ENCODE measurements at regions of chr10 and their contacts with region 1.

Region 1: GRCh38 chr10:79068562-79069324 is at the start of gene ZMIZ1:
- DNase-seq: peak; percentile 63 to 90 (median 76)
- ATAC-seq: peak; percentile 62
- H3K4me3 ChIP-seq: peak within 1 kb of the TSS; percentile 97
- H3K4me3 Mint-ChIP-seq: peak within 1 kb of the TSS; percentile 97
- H3K27ac ChIP-seq: peak within 1 kb of the TSS; percentile 44 to 46
- H3K27ac Mint-ChIP-seq: peak within 1 kb of the TSS; percentile 86
- H3K4me1 ChIP-seq: peaks cover 64% of the 10 kb centered on the region
- H3K4me1 Mint-ChIP-seq: peaks cover 56% of the 10 kb centered on the region
- H3K27me3 ChIP-seq: no peaks in the 10 kb centered on the region
- H3K27me3 Mint-ChIP-seq: no peaks in the 10 kb centered on the region
- CTCF ChIP-seq: no peak
- total RNA-seq, gene ZMIZ1: 14.6 to 15.5 TPM

Region 2: DNA sequence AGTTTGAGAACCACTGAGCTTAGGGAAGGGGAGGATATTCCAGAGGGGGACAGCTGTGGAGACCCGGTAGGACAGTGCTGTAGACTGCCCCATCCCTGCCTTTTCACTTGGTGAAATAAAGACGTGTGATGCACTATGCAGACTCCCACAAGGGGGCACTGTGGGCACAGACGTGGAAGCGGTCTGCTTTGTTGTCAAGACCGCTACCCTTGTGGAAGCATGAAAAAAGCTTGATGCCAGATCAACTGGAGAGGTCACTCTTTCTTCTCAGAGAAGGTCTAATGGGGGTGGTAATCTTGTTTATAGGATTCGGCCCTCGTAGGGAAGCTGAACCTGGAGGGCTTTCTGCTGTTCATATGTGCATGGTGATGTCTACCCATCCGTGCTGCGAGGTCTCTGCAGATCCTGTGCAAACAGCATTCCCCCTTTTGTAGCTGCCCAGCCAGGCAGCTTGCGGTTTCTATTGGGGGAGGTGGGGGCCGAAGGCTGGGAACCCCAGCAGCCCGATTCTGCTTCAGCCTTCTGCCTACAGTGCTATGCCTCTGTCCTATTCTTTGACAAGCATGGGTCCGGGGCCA is 1021.3 kb before region 1 on chr10:
- CTCF ChIA-PET with region 1: interaction called, 3 read pairs
- POLR2A ChIA-PET with region 1: no interaction called
- intact Hi-C with region 1: loop called in 1 of 2 experiments (anchors 5 kb)
- DNase-seq: peak; percentile 70 to 87 (median 78)
- ATAC-seq: peak; percentile 94
- H3K4me3 ChIP-seq: no peak overlapping the region
- H3K4me3 Mint-ChIP-seq: no peak overlapping the region
- H3K27ac ChIP-seq: no peak overlapping the region
- H3K27ac Mint-ChIP-seq: no peak overlapping the region
- H3K4me1 ChIP-seq: peaks cover 14% of the 10 kb centered on the region
- H3K4me1 Mint-ChIP-seq: peaks cover 19% of the 10 kb centered on the region
- H3K27me3 ChIP-seq: no peaks in the 10 kb centered on the region
- H3K27me3 Mint-ChIP-seq: no peaks in the 10 kb centered on the region
- CTCF ChIP-seq: peak; percentile 86

Region 3: DNA sequence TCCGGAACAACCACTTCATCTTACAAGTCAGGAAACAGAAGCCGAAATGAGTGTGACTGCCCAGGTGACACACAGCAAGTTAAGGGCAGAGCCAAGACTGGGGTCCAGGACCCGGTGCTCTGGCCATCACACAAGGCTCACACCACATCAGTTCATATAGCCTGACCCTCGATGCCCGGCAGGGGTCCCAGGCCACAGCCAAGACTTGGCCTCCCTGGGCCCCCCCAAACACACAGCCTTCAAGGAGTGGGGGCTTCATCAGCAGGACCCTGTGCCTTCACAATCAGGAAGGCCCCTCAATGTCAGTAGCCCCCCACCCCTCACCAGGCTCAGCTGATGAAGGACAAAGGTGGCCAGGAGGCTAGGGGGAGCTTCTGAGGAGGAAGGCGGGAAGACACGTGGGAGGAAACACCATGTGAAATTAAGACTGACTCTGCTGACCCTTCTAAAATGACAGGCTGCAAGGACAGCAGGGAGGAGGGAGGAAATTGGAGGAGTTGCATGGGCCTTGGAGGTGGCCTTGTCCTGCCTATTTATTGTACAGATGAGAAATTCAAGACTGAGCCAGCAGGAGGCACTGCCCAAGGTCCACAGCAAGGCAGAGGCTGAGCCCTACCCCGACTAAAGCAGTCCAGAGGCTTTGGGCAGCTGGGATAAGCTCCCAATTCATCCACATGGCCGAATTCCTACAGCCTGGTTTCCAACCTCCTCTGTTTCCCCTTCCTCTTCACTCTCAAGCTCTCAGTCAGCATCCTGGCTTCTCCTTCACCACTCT is 216.1 kb before region 1 on chr10:
- CTCF ChIA-PET with region 1: no interaction called
- POLR2A ChIA-PET with region 1: no interaction called
- intact Hi-C with region 1: loop called in 1 of 2 experiments (anchors 5 kb)
- DNase-seq: peak in 5 of 14 experiments; percentile 6 to 47 (median 32)
- ATAC-seq: no peak
- H3K4me3 ChIP-seq: no peak overlapping the region
- H3K4me3 Mint-ChIP-seq: no peak overlapping the region
- H3K27ac ChIP-seq: no peak overlapping the region
- H3K27ac Mint-ChIP-seq: no peak overlapping the region
- H3K4me1 ChIP-seq: no peaks in the 10 kb centered on the region
- H3K4me1 Mint-ChIP-seq: no peaks in the 10 kb centered on the region
- H3K27me3 ChIP-seq: no peaks in the 10 kb centered on the region
- H3K27me3 Mint-ChIP-seq: no peaks in the 10 kb centered on the region
- CTCF ChIP-seq: no peak

Region 4: DNA sequence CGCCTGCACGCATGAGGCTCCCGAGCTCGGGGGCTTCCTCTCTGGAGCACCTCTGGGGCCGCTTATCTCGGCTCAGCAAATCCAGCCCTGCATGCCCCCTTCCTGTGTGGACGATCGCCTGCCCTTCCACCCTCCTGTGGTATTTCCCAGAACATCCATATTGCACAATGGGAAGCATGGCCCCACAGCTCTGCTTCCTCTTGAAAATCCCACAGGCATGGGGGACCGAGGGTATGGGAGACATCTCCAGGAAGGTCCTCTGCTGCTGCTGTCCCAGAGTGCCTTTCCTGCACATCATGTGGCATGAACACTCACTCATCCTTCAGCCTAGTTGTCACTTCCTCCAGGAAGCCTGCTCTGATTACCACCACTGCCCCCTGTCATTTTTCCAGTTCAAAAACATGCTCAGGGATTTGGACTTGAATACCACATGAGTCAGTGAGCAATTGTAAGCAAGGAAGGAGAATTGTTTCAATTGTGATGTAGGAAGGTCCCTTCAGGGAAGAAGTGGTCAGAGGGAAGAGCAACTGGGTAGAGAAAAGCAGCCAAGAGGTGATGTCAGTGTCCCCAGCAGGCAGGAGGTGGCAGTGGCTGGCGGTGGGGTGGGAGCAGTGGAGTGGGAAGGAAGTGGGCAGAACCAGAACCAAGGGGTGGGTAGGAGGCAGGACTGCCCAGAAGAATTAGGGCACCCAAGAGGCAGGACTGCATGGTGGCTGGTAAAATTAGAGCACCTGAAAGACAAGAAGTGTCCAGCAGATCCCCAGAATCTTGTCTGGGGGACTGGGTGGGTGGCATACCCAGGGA is 67.5 kb before region 1 on chr10:
- CTCF ChIA-PET with region 1: no interaction called
- POLR2A ChIA-PET with region 1: no interaction called
- intact Hi-C with region 1: no loop called
- DNase-seq: peak in 2 of 14 experiments; percentile 39 to 49
- ATAC-seq: no peak
- H3K4me3 ChIP-seq: no peak overlapping the region
- H3K4me3 Mint-ChIP-seq: no peak overlapping the region
- H3K27ac ChIP-seq: no peak overlapping the region
- H3K27ac Mint-ChIP-seq: no peak overlapping the region
- H3K4me1 ChIP-seq: peaks cover 6% of the 10 kb centered on the region
- H3K4me1 Mint-ChIP-seq: no peaks in the 10 kb centered on the region
- H3K27me3 ChIP-seq: no peaks in the 10 kb centered on the region
- H3K27me3 Mint-ChIP-seq: no peaks in the 10 kb centered on the region
- CTCF ChIP-seq: no peak

Region 5: DNA sequence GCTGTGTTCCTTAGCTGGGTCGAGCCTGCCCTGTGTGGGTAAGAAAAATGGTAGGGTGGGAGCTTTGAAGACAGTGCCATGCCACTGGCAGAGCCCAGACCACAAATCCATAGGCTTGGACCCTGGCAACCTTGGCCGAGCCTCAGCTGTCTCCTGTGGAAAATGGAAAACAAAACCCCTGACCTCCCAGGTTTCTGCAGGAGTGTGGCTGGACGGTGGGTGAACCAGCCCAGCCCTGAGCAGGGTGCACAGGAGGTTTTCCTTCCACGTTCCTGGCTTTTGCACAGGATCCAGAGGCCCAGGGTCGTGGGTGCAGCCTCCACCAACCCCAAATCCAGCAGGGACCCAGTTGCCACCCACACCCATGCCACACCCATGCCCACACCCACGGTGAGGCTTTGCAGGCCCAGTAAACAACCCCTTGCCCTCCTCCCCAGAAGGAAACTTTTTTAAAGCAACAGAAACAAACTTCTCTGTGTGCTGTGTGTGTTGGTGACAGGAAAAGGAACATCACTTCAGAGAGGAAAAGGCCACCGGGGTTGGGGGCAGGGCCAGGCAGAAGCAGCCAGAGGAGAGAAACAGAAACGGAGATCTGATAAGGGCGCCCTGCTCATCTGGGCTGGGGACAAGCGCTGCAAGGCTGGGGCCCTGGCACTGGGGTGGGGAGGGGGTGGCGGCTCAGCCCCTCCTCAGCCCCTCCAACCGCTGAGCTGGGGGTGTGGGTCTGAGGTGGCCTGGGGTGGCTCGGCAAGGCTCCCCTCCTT is 20.7 kb before region 1 on chr10:
- CTCF ChIA-PET with region 1: no interaction called
- POLR2A ChIA-PET with region 1: interaction called, 27 read pairs
- intact Hi-C with region 1: loop called in 1 of 2 experiments (anchors 1 kb)
- DNase-seq: peak; percentile 34 to 86 (median 69)
- ATAC-seq: peak; percentile 74
- H3K4me3 ChIP-seq: peak overlapping the region; percentile 61
- H3K4me3 Mint-ChIP-seq: peak overlapping the region; percentile 66
- H3K27ac ChIP-seq: peak overlapping the region; percentile 81 to 93
- H3K27ac Mint-ChIP-seq: peak overlapping the region; percentile 86
- H3K4me1 ChIP-seq: peaks cover 90% of the 10 kb centered on the region
- H3K4me1 Mint-ChIP-seq: peaks cover 89% of the 10 kb centered on the region
- H3K27me3 ChIP-seq: no peaks in the 10 kb centered on the region
- H3K27me3 Mint-ChIP-seq: no peaks in the 10 kb centered on the region
- CTCF ChIP-seq: no peak

Region 6: DNA sequence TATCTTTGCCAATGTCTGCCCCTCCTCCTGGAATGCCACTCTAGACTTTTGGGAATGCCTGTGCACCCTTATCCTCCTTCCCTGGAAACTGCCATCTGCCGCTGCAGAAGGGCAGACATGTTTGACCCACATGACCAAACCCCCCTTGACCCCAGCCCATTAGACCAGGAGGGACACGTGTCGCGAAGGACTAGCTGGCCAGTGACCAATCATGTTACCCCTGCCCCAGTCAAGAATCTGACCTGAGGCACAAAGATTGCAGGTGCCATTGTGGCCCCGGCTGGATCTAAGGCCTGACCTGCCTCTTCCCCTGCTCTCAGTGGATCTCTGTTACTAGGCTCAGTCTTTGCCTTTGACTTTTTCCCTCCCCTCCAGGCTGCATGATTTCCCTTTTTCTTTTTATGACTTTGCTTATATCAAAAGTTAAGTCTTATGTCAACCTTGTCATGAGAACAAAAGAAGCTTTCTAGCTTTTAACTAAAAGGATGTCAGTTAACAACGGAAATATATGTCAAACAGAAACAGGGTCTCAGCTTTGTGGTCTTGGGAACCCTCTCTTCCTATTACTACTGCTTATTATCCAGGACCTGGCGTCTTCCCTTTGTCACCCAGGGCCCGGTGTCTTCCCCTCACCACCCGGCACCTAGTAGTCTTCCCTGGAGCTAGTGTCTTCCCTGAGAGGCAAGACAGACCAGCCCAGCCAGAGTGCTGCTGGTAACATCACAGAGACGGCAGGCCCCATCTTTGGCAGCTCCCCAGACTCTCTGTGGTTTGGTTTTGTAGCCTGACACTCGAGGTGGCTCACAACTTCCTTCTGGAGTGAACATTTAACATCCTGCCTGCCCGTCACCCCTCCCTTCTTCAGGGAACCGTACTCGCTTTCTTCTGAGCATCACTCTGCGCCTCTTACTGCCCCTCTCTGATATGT is 254.1 kb after region 1 on chr10:
- CTCF ChIA-PET with region 1: no interaction called
- POLR2A ChIA-PET with region 1: interaction called, 3 read pairs
- intact Hi-C with region 1: loop called in 1 of 2 experiments (anchors 10 kb)
- DNase-seq: peak; percentile 64 to 92 (median 81)
- ATAC-seq: peak; percentile 93
- H3K4me3 ChIP-seq: peak overlapping the region; percentile 17
- H3K4me3 Mint-ChIP-seq: peak overlapping the region; percentile 82
- H3K27ac ChIP-seq: peak overlapping the region; percentile 42 to 67
- H3K27ac Mint-ChIP-seq: peak overlapping the region; percentile 93
- H3K4me1 ChIP-seq: peaks cover 79% of the 10 kb centered on the region
- H3K4me1 Mint-ChIP-seq: peaks cover 73% of the 10 kb centered on the region
- H3K27me3 ChIP-seq: no peaks in the 10 kb centered on the region
- H3K27me3 Mint-ChIP-seq: peaks cover under 1% of the 10 kb centered on the region
- CTCF ChIP-seq: no peak

Measured in CD4-positive, alpha-beta T cell (primary cell).